ENCODE measurements at regions of chr11 and their contacts with region 1.

Region 1: DNA sequence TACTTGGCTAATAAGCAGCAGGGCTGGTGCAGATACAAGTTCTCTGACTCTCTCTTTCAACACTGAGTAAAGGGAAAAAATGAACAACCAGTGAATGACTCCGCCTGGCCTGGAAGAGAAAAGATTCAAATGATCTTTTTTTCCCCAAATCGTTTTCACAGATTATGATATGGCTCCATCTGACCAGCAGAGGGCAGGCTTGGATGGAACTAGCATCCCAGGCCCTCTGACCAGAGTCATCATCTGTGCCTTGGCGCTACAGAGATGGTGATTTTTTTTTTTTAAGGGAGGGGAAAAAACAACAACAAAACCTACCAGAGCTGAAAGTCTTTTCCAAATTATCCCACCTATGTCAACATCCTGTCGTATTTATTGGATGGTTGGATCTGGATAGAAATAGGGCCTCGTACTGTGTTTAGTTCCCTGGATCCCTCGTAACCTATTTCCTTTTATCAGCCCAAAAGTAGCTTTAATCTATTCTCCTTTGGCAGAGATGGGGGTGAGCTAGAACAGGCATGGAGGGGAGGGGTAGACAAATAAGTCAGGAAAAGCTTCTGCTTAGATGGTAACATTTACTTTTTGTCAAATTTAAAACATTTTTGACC is 69.7 kb downstream of the PRSS23 start:
- DNase-seq: peak; percentile 54 to 70
- ATAC-seq: peak; percentile 87 to 95
- H3K4me3 ChIP-seq: no peak overlapping the region
- H3K27ac ChIP-seq: no peak overlapping the region
- H3K4me1 ChIP-seq: no peaks in the 10 kb centered on the region
- CTCF ChIP-seq: peak; percentile 85
- EP300 ChIP-seq: no peak
- POLR2A ChIP-seq: no peak
- RAD21 ChIP-seq: peak; percentile 83 to 92

Region 2: DNA sequence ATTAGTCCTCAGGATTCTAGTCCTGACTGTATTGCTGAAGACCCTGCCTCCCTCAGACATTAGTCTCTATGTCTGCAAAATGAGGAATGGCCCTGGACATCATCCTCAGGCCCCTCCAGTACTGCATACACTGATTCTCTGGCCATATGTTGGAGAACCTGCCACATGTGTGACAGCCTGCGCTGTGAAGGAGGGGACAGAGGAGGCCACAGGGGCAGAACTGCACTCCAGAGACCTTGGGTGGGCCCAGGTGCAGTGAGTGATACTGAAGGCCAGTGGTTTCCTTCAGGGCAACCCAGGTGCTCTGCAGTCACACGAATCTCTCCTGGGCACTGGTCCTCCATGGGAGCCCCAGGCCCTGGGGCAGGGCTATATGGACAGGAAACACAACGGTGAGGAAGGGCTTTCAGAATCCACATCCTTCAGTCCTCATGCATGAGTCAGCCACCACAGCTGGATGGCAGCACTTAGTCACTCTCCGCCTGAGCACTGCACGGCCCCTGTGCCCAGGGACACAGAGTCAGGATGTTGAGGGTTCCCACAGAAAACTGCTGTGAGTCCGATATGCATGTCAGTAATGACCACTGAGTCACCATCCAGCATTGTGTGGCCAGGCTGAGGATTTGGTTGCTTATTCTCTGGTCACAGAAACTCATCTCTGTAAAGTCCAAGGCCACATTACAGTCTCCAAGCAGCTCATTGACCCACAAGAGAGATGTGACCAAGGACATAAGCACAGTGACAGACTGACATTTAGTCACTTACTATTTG is 237.4 kb before region 1 on chr11:
- CTCF ChIA-PET with region 1: no interaction called
- POLR2A ChIA-PET with region 1: no interaction called
- DNase-seq: peak; percentile 82 to 89
- ATAC-seq: peak; percentile 98
- H3K4me3 ChIP-seq: no peak overlapping the region
- H3K27ac ChIP-seq: peak overlapping the region; percentile 69 to 88
- H3K4me1 ChIP-seq: peaks cover 29% of the 10 kb centered on the region
- CTCF ChIP-seq: peak; percentile 53
- EP300 ChIP-seq: no peak
- POLR2A ChIP-seq: no peak
- RAD21 ChIP-seq: peak; percentile 78 to 80

Region 3: GRCh38 chr11:86805873-86806310 is 64.2 kb before region 1 on chr11:
- CTCF ChIA-PET with region 1: no interaction called
- POLR2A ChIA-PET with region 1: no interaction called
- DNase-seq: no peak
- ATAC-seq: no peak
- H3K4me3 ChIP-seq: no peak overlapping the region
- H3K27ac ChIP-seq: peak overlapping the region in 1 of 2 experiments; percentile 19; a peak in 4 of 6 replicates
- H3K4me1 ChIP-seq: peaks cover 79% of the 10 kb centered on the region
- CTCF ChIP-seq: no peak
- EP300 ChIP-seq: no peak
- POLR2A ChIP-seq: no peak
- RAD21 ChIP-seq: no peak

Region 4: GRCh38 chr11:86848861-86849260 is 21.2 kb before region 1 on chr11:
- CTCF ChIA-PET with region 1: interaction called, 22 read pairs
- POLR2A ChIA-PET with region 1: no interaction called
- DNase-seq: no peak
- ATAC-seq: no peak
- H3K4me3 ChIP-seq: no peak overlapping the region
- H3K27ac ChIP-seq: no peak overlapping the region
- H3K4me1 ChIP-seq: no peaks in the 10 kb centered on the region
- CTCF ChIP-seq: no peak
- EP300 ChIP-seq: no peak
- POLR2A ChIP-seq: no peak
- RAD21 ChIP-seq: no peak

Region 5: GRCh38 chr11:86888164-86889000 is 18.3 kb after region 1 on chr11:
- CTCF ChIA-PET with region 1: interaction called, 12 read pairs
- POLR2A ChIA-PET with region 1: no interaction called
- DNase-seq: no peak
- ATAC-seq: no peak
- H3K4me3 ChIP-seq: no peak overlapping the region
- H3K27ac ChIP-seq: no peak overlapping the region
- H3K4me1 ChIP-seq: no peaks in the 10 kb centered on the region
- CTCF ChIP-seq: no peak
- EP300 ChIP-seq: no peak
- POLR2A ChIP-seq: no peak
- RAD21 ChIP-seq: no peak

Region 6: DNA sequence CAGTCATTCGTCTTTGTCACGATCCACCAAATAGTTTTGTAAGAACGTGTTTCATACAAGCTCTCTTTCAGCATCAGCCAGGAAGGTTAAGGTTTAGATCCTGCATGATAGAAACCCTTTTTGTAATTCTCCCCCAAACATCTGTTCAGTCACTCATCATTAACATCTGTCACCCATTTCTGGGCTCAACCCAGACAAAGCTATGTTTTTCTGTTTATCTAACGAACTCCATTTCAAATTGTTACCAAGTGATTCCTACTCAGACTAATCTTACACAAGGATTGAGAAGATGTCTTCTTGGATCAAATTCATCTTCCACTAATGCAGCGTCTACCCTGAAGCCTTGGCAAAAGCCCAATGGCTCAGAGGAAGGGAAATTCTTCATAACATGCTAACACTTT is 26.4 kb after region 1 on chr11:
- CTCF ChIA-PET with region 1: interaction called, 19 read pairs
- POLR2A ChIA-PET with region 1: no interaction called
- DNase-seq: no peak
- ATAC-seq: no peak
- H3K4me3 ChIP-seq: no peak overlapping the region
- H3K27ac ChIP-seq: no peak overlapping the region
- H3K4me1 ChIP-seq: no peaks in the 10 kb centered on the region
- CTCF ChIP-seq: no peak
- EP300 ChIP-seq: no peak
- POLR2A ChIP-seq: no peak
- RAD21 ChIP-seq: no peak

Region 7: GRCh38 chr11:86919557-86920210 is 49.6 kb after region 1 on chr11:
- CTCF ChIA-PET with region 1: interaction called, 208 read pairs
- POLR2A ChIA-PET with region 1: no interaction called
- DNase-seq: peak; percentile 57 to 74
- ATAC-seq: peak; percentile 86 to 90; a peak in 5 of 6 replicates
- H3K4me3 ChIP-seq: no peak overlapping the region
- H3K27ac ChIP-seq: peak overlapping the region in 1 of 2 experiments; percentile 48; a peak in 3 of 6 replicates
- H3K4me1 ChIP-seq: peaks cover 22% of the 10 kb centered on the region
- CTCF ChIP-seq: peak; percentile 87
- EP300 ChIP-seq: no peak
- POLR2A ChIP-seq: no peak
- RAD21 ChIP-seq: peak; percentile 89 to 94

Region 8: DNA sequence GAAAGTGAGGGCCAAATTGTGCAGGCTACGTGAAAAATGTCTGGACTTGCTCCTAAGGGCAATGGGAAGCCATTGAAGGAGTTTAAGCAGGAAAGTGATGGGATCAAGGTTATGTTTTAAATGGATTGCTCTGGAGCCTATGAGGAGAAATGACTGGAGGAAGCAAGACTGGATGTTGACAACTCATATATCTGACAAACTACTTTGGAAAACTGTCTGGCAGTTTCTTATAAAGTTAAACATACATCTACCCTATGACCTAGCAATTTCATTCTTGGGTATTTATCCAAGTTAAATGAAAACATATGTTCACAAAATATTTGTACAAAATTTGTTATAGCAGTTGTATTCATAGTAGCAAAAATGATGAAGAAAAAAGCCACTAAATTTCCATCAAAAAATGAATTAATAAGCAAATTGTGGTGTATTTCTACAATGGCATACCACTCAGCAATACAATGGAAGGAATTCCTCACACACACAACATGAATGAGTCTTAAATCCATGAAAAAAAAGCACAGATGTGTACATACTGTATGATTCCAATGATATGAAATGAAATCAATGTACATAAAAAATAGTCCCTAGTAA is 61.0 kb after region 1 on chr11:
- CTCF ChIA-PET with region 1: interaction called, 208 read pairs
- POLR2A ChIA-PET with region 1: no interaction called
- DNase-seq: no peak
- ATAC-seq: no peak
- H3K4me3 ChIP-seq: no peak overlapping the region
- H3K27ac ChIP-seq: no peak overlapping the region
- H3K4me1 ChIP-seq: peaks cover 14% of the 10 kb centered on the region
- CTCF ChIP-seq: no peak
- EP300 ChIP-seq: no peak
- POLR2A ChIP-seq: no peak
- RAD21 ChIP-seq: no peak

Measured in A549 (cell line).